PC-3 (cell line): ENCODE measurements at regions of chr2 and their contacts with region 1.

Region 1: GRCh38 chr2:118032169-118033013 is 18.5 kb upstream of the CCDC93 start:
- DNase-seq: peak; percentile 68
- ATAC-seq: peak; percentile 81
- H3K4me3 ChIP-seq: no peak overlapping the region
- H3K27ac ChIP-seq: no peak overlapping the region
- H3K4me1 ChIP-seq: no peaks in the 10 kb centered on the region
- H3K27me3 ChIP-seq: peaks cover 13% of the 10 kb centered on the region
- CTCF ChIP-seq: peak; percentile 83

Region 2: DNA sequence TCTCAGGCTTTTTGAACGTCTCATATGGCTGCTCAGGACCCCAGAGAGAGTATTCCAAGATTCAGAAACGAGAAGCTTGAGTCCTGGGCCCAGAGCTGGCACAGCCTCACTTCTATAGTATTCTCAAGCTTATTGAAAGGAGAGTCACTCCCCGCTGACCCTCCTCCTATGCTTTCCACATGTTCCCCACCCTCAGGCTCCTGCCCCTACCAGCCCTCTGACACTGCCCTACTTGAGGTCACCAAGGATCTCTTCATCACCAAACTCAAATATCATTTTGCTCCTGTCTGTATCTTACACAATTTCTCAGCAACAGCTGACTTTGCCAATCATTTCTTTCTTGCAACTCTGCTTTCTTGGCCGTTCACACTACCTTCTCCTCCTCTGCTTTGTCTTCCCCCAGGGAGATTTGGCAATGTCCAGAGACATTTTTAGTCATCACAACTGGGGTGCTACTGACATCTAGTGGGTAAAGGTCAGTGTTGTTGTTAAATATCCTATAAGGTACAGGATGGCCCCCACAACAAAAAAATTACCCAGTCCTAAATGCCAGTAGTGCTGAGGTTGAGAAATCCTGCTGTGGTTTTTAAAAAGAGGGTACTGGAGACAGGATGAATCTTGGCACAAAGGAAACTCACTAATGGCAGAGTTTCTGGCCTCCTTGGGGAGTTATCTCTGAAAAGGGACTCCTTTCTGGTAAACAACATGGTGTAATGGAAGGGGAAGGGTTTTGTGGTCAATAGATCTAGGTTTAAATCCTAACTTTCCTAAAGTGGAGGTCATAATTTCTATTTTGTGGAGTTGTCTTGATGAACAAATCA is 29.0 kb after region 1 on chr2:
- CTCF ChIA-PET with region 1: no interaction called
- POLR2A ChIA-PET with region 1: no interaction called
- intact Hi-C with region 1: loop called (anchors 1 kb)
- DNase-seq: peak; percentile 78
- ATAC-seq: peak; percentile 76
- H3K4me3 ChIP-seq: no peak overlapping the region
- H3K27ac ChIP-seq: no peak overlapping the region
- H3K4me1 ChIP-seq: peaks cover 18% of the 10 kb centered on the region; the same call in 1 of the 2 replicates
- H3K27me3 ChIP-seq: no peaks in the 10 kb centered on the region
- CTCF ChIP-seq: peak; percentile 73

Region 3: DNA sequence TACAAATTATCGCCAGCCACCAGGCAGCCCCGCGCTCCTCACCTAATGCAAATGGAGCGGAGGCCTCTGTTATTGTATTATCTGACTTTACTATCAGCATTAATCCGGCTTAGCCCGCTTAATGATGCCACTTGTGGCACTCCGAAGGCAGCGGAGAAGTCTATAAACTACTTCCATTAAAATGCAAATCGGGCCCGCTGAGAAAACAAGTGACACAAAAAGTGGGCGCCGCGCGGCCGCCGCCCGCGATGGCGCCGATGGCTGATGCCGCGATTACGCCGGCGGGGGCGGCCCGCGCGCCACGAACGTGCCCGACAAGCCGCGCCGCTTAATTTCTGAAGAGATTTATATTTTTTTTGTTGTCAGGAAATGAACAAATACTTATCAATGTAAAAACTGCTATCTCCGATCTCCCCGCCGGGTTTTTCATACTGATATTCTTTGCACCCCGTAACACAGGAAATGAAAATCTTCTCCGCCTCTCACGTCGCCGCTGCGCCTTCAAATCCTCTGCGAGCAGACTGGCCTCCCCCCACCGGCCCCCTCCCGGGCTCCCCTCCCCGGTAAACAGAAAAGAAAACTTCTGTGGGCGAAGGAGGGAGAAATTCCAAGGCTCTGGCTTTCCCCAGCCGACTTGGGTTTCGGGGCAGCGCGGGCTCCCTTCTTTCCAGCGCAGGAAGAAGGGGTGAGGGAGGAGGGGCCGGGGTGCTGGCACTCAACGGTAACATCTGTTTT is 277.7 kb after region 1 on chr2:
- CTCF ChIA-PET with region 1: no interaction called
- POLR2A ChIA-PET with region 1: no interaction called
- intact Hi-C with region 1: no loop called
- DNase-seq: no peak
- ATAC-seq: no peak
- H3K4me3 ChIP-seq: no peak overlapping the region
- H3K27ac ChIP-seq: no peak overlapping the region
- H3K4me1 ChIP-seq: no peaks in the 10 kb centered on the region
- H3K27me3 ChIP-seq: no peaks in the 10 kb centered on the region
- CTCF ChIP-seq: no peak

Region 4: DNA sequence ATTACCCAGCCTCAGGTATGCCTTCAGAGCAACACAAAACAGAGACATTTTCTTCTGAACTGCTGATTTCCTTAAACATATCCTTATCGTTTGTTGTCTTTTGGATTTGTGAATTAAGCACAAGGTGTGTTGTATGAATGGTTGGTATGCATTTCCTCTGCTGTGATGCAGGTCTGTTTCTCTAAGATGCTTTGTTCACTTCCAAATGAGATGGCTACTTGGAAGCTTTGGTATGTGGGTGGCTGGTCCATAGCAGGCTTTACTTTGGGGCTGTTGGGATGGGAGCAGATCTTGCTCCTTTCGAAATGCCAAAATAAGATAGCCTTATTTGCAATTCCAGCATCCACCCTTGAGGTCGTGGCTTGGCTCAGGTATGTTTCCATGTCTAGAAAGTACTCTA is 313.1 kb after region 1 on chr2:
- CTCF ChIA-PET with region 1: interaction called, 13 read pairs
- POLR2A ChIA-PET with region 1: no interaction called
- intact Hi-C with region 1: no loop called
- DNase-seq: no peak
- ATAC-seq: no peak
- H3K4me3 ChIP-seq: no peak overlapping the region
- H3K27ac ChIP-seq: no peak overlapping the region
- H3K4me1 ChIP-seq: no peaks in the 10 kb centered on the region
- H3K27me3 ChIP-seq: no peaks in the 10 kb centered on the region
- CTCF ChIP-seq: no peak

Region 5: DNA sequence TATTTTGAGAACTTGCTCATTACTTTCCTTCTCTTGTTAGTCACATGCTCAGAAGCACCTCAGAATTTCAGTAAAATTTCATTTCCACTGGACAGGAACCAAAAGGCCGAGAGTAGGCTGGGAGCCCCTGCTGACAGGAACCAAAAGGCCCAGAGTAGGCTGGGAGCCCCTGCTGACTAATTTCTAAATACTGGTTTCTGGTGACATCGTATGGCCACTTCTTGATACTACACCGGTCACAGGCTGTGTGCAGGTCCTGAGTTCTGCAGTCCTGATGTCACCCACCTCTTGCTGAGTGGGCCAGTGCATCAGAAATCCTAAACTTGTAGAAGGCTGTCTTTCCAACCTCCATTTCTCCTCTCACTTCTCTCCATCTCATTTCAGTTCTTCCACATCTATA is 832.7 kb after region 1 on chr2:
- CTCF ChIA-PET with region 1: no interaction called
- POLR2A ChIA-PET with region 1: no interaction called
- intact Hi-C with region 1: loop called (anchors 1 kb)
- DNase-seq: peak; percentile 79
- ATAC-seq: peak; percentile 98
- H3K4me3 ChIP-seq: no peak overlapping the region
- H3K27ac ChIP-seq: no peak overlapping the region
- H3K4me1 ChIP-seq: peaks cover 16% of the 10 kb centered on the region
- H3K27me3 ChIP-seq: no peaks in the 10 kb centered on the region
- CTCF ChIP-seq: peak; percentile 84